HCT116 (cell line): ENCODE measurements at regions of chr11 and their contacts with region 1.

Region 1: DNA sequence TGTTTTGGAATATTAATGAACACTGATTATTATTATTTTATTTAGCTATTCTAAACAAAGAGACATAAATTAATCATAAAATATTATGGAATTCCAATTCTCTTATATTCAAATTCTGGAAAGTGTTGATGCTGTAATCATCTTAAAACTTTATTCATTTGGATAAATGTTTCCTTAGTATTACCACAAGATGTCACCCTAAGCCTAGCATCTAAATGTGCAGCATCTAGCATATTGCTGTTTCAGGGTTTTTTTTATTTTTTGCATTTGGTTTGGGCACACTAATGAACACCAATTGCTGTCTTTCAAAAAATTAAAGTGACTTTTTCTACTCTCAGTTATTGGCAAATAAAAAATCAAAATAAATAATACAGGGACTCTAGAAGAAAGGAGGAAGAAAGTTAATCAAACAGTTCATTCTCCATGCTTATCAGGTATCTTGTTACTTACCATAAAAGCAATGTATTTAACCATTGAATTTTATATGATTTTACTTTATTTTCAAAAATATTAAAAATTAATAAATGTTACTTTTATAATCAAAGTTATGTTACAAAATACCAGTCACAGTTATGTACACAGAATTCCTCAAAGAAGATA is 31.8 kb downstream of the DLG2 start:
- DNase-seq: peak; percentile 46
- ATAC-seq: peak; percentile 62
- H3K4me3 ChIP-seq: no peak overlapping the region
- H3K27ac ChIP-seq: no peak overlapping the region
- H3K4me1 ChIP-seq: no peaks in the 10 kb centered on the region
- H3K27me3 ChIP-seq: no peaks in the 10 kb centered on the region
- CTCF ChIP-seq: peak; percentile 29 to 80 (median 65); a peak in 5 of 6 replicates
- POLR2A ChIP-seq: no peak
- RAD21 ChIP-seq: peak; percentile 89

Region 2: DNA sequence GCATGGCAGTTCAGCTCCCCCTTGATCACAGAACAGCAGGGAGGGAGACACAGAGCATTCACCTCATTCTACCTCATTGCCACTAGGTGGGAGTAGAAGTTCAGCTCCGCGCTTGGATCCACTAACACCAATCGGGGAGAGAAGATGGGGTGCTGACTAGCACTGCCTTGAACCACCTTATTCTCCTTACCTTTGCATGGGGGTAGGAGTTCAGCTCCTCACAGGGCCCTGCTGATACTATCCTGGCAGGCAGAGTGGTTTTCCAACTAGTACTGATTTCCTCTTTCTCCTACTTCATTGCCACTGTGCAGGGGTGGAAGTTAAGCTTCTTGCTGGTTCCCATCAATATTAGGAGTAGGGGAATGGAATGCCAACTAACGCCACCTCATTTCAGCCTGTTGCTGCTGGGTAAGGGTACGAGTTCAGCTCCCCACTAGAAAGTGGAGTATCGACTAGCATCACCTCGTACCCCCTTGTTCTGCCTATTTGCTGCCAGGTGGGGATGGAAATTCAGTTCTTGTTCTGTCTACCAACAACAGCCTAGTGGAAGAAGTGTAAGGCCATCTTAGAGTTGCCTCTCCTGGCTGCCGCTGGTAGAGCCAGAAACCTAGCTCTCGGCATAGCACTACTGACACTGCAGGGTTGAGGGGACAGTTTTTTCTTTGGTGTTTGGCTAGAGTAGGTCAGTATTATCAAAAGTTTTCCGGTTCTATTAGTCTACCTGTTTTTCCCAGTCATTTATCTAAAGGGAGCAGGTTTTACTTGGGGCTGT is 1758.3 kb before region 1 on chr11:
- CTCF ChIA-PET with region 1: no interaction called
- POLR2A ChIA-PET with region 1: no interaction called
- RAD21 ChIA-PET with region 1: no interaction called
- intact Hi-C with region 1: loop called (anchors 5 kb)
- DNase-seq: peak; percentile 24
- ATAC-seq: peak; percentile 98
- H3K4me3 ChIP-seq: no peak overlapping the region
- H3K27ac ChIP-seq: no peak overlapping the region
- H3K4me1 ChIP-seq: no peaks in the 10 kb centered on the region
- H3K27me3 ChIP-seq: no peaks in the 10 kb centered on the region; the same call in 1 of the 2 replicates
- CTCF ChIP-seq: peak; percentile 43 to 75 (median 74); a peak in 5 of 6 replicates
- POLR2A ChIP-seq: no peak
- RAD21 ChIP-seq: peak; percentile 71

Region 3: GRCh38 chr11:84408946-84409411 is 1186.4 kb before region 1 on chr11:
- CTCF ChIA-PET with region 1: no interaction called
- POLR2A ChIA-PET with region 1: no interaction called
- RAD21 ChIA-PET with region 1: no interaction called
- intact Hi-C with region 1: no loop called
- DNase-seq: no peak
- ATAC-seq: no peak
- H3K4me3 ChIP-seq: no peak overlapping the region
- H3K27ac ChIP-seq: no peak overlapping the region
- H3K4me1 ChIP-seq: no peaks in the 10 kb centered on the region
- H3K27me3 ChIP-seq: no peaks in the 10 kb centered on the region
- CTCF ChIP-seq: no peak
- POLR2A ChIP-seq: no peak
- RAD21 ChIP-seq: no peak

Region 4: DNA sequence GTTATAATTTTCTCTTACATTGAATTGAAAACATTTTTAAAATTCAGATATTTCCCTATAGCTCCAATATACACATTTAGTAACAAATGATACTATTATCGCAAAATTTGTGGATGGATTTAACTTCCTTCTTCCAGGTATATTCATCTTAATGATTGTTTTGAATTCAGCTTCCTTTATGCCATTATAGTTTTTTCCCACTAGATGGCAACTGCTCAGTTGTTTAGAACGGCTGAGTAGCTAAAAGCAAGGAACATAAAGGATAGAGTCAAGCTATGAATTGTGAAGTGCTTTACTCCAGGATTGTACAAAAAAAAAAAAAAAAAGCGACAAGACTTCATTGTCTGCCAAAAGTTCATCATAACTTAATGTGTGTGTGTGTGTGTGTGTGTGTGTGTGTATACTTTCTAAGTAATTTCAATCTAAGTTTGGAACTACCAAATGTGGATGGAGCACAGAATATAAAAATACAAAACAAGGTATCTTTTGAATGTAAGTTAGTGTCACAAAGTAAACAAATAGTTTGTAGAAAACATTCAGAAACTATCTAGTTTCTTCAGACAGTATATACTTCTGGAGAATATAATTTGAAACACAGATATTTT is 814.6 kb before region 1 on chr11:
- CTCF ChIA-PET with region 1: interaction called, 8 read pairs
- POLR2A ChIA-PET with region 1: no interaction called
- RAD21 ChIA-PET with region 1: no interaction called
- intact Hi-C with region 1: loop called (anchors 2 kb)
- DNase-seq: peak; percentile 12
- ATAC-seq: 0 out of 2 replicates have a peak, but pooled peaks have one; percentile 49
- H3K4me3 ChIP-seq: no peak overlapping the region
- H3K27ac ChIP-seq: no peak overlapping the region
- H3K4me1 ChIP-seq: no peaks in the 10 kb centered on the region
- H3K27me3 ChIP-seq: no peaks in the 10 kb centered on the region
- CTCF ChIP-seq: peak; percentile 17 to 56 (median 44); a peak in 5 of 6 replicates
- POLR2A ChIP-seq: no peak
- RAD21 ChIP-seq: peak; percentile 48

Region 5: GRCh38 chr11:85582111-85582510 is 13.3 kb before region 1 on chr11:
- CTCF ChIA-PET with region 1: no interaction called
- POLR2A ChIA-PET with region 1: no interaction called
- RAD21 ChIA-PET with region 1: no interaction called
- intact Hi-C with region 1: no loop called
- DNase-seq: no peak
- ATAC-seq: no peak
- H3K4me3 ChIP-seq: no peak overlapping the region
- H3K27ac ChIP-seq: no peak overlapping the region
- H3K4me1 ChIP-seq: no peaks in the 10 kb centered on the region
- H3K27me3 ChIP-seq: no peaks in the 10 kb centered on the region
- CTCF ChIP-seq: no peak
- POLR2A ChIP-seq: no peak
- RAD21 ChIP-seq: no peak

Region 6: GRCh38 chr11:85844426-85845129 is 249.2 kb after region 1 on chr11:
- CTCF ChIA-PET with region 1: no interaction called
- POLR2A ChIA-PET with region 1: no interaction called
- RAD21 ChIA-PET with region 1: no interaction called
- intact Hi-C with region 1: loop called (anchors 5 kb)
- DNase-seq: peak; percentile 77
- ATAC-seq: peak; percentile 93
- H3K4me3 ChIP-seq: peak overlapping the region in 1 of 2 experiments; percentile 3; a peak in 1 of 4 replicates
- H3K27ac ChIP-seq: peak overlapping the region; percentile 47
- H3K4me1 ChIP-seq: peaks cover 13 to 22% of the 10 kb centered on the region in 2 experiments
- H3K27me3 ChIP-seq: no peaks in the 10 kb centered on the region
- CTCF ChIP-seq: no peak
- POLR2A ChIP-seq: no peak
- RAD21 ChIP-seq: no peak

Region 7: GRCh38 chr11:86291466-86292262 is 696.3 kb after region 1 on chr11:
- CTCF ChIA-PET with region 1: no interaction called
- POLR2A ChIA-PET with region 1: no interaction called
- RAD21 ChIA-PET with region 1: no interaction called
- intact Hi-C with region 1: loop called (anchors 1 kb)
- DNase-seq: peak; percentile 39
- ATAC-seq: peak; percentile 74
- H3K4me3 ChIP-seq: no peak overlapping the region
- H3K27ac ChIP-seq: no peak overlapping the region
- H3K4me1 ChIP-seq: no peaks in the 10 kb centered on the region
- H3K27me3 ChIP-seq: no peaks in the 10 kb centered on the region
- CTCF ChIP-seq: peak; percentile 76 to 86 (median 77)
- POLR2A ChIP-seq: no peak
- RAD21 ChIP-seq: peak; percentile 85

Region 8: DNA sequence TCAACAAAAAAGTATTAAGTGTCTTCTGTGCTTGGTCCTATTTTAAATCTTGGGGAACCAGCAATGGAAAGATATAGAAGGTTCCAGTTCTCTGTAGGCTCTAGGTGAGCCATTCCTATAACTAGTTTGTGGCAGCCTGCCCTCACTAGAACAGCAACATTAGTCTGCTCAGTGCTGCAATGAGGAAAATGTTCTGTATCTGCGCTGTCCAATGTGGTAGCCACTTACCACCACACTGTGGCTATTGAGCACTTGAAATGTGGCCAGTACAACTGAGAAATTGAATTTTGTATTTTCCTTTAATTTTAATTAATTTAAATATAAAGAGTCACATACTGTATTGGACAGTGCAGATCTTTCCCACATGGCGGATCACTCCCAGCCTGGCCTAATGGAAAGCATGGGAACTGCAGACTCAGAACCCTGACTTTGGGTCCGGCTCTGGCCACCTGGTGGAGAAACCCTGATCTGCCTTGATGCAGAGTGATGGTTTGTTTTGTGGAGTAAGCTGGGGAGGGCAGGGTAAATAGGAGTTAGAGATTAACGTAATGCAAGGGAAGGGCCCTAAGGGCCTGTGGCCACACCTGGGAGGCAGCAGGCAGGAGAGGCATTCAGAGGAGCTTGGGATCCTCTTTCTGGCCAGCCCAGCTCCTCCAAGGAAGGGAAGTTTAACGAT is 976.0 kb after region 1 on chr11:
- CTCF ChIA-PET with region 1: no interaction called
- POLR2A ChIA-PET with region 1: no interaction called
- RAD21 ChIA-PET with region 1: no interaction called
- intact Hi-C with region 1: loop called (anchors 5 kb)
- DNase-seq: peak; percentile 80
- ATAC-seq: peak; percentile 98
- H3K4me3 ChIP-seq: no peak overlapping the region
- H3K27ac ChIP-seq: no peak overlapping the region
- H3K4me1 ChIP-seq: peaks cover 6 to 25% of the 10 kb centered on the region in 2 experiments; a peak in 2 of 4 replicates
- H3K27me3 ChIP-seq: no peaks in the 10 kb centered on the region; the same call in 1 of the 2 replicates
- CTCF ChIP-seq: peak; percentile 77 to 96 (median 93)
- POLR2A ChIP-seq: no peak
- RAD21 ChIP-seq: peak; percentile 79